ENCODE measurements at regions of chr16 and their contacts with region 1.

Region 1: DNA sequence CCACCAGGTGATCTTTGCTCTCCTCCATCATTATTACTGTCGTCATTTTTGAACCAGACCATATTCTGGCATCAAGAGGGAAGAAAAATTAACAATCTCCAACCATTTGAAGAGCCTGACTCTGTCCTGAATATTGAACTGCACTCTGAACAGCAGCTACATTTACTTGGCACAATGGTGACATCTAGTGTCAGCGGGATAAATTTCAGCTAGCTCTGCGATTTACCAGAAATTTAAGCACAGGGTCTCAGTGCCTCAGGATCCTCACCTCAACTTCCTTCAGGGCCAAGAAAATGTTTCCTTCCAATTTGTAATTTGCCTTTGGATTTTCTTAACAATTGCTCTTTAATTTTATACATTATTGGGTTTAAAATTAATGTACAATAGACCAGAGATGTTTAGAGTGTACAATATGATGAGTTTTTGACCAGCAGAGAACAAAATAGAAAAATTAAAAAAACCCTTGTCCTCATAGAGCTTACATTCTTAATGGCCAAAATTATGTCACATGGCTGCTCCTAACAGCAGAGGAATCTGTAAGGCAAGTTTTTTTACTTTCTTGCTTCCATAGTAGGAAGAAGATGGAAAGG is 10.7 kb upstream of the ZNF19 start:
- DNase-seq: peak; percentile 70
- CTCF ChIP-seq: peak; percentile 79

Region 2: GRCh38 chr16:70481929-70482536 is 1017.8 kb before region 1 on chr16:
- CTCF ChIA-PET with region 1: no interaction called
- POLR2A ChIA-PET with region 1: no interaction called
- DNase-seq: no peak
- CTCF ChIP-seq: no peak

Region 3: GRCh38 chr16:71358464-71358998 is 141.3 kb before region 1 on chr16 and contains the start of gene CALB2:
- CTCF ChIA-PET with region 1: interaction called, 13 read pairs
- POLR2A ChIA-PET with region 1: no interaction called
- DNase-seq: peak; percentile 85
- CTCF ChIP-seq: peak; percentile 98

Region 4: GRCh38 chr16:71426072-71426879 is 73.6 kb before region 1 on chr16:
- CTCF ChIA-PET with region 1: interaction called, 14 read pairs
- POLR2A ChIA-PET with region 1: no interaction called
- DNase-seq: peak; percentile 46
- CTCF ChIP-seq: no peak

Region 5: DNA sequence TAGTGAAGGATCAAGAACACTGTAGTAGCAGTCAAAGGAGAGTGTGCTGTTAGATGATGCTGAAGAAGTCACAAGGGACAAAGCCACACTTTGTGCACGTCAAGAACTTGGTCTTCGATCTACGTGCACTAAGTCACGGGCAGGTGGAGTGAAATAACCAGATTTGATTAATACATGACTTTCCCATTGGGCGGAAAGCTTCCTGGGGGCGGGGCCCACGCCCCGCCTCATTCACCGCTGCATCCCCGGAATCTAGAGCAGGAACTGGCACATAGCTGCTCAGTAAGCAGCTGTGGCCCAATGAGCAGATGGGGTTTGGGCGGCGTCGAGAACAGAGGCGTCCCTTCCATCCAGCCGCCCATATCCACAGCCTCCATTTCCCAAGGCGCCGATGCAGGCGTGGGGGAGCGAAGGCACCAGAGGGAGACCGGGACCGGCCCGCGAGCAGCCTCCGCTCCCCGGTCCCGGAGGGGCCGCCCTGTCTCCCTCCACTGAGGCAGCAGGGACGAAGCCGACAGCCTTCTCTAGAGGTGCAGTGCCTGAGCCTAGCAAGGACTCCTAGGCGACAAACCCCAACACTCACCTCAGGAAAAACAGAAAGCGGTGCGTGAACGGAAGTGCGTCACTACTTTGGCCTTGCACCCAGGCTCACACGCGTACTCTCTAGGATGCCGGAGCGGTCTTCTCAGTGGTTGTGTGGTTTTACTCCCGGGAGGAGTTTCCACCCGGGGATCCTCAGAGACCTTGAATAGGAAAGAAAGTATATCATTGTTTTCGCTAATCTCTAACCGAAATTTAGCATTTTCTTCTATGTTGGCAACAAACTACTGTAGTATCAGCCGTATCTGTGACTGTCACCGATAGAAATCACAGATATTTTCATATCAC is 15.6 kb before region 1 on chr16:
- CTCF ChIA-PET with region 1: interaction called, 49 read pairs
- POLR2A ChIA-PET with region 1: no interaction called
- DNase-seq: peak; percentile 84
- CTCF ChIP-seq: no peak

Region 6: DNA sequence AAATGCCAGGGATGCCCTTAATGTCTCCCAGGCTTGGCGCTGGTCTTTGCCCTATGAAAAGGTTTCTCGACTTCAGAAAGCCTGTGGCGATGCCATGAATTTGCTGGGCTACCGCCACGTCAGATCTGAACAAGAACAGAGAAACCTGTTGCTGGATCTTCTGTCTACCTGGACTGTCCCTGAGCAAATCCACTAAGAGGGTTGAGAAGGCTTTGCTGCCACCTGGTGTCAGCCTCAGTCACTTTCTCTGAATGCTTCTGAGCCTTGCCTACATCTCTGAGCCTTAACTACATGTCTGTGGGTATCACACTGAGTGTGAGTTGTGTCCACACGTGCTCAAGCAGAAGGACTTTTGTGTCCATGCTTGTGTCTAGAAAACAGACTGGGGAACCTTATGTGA is 37.8 kb after region 1 on chr16:
- CTCF ChIA-PET with region 1: interaction called, 44 read pairs
- POLR2A ChIA-PET with region 1: no interaction called
- DNase-seq: peak; percentile 67
- CTCF ChIP-seq: peak; percentile 79

Region 7: GRCh38 chr16:71576971-71577370 is 77.1 kb after region 1 on chr16 and contains the start of gene TAT:
- CTCF ChIA-PET with region 1: no interaction called
- POLR2A ChIA-PET with region 1: no interaction called
- DNase-seq: no peak
- CTCF ChIP-seq: no peak

Measured in GM10248 (cell line).